Activated CD4-positive, alpha-beta T cell treated with anti-CD3 and anti-CD28 coated beads for 36 hours (primary cell): ENCODE measurements at regions of chr6 and their contacts with region 1.

Region 1: DNA sequence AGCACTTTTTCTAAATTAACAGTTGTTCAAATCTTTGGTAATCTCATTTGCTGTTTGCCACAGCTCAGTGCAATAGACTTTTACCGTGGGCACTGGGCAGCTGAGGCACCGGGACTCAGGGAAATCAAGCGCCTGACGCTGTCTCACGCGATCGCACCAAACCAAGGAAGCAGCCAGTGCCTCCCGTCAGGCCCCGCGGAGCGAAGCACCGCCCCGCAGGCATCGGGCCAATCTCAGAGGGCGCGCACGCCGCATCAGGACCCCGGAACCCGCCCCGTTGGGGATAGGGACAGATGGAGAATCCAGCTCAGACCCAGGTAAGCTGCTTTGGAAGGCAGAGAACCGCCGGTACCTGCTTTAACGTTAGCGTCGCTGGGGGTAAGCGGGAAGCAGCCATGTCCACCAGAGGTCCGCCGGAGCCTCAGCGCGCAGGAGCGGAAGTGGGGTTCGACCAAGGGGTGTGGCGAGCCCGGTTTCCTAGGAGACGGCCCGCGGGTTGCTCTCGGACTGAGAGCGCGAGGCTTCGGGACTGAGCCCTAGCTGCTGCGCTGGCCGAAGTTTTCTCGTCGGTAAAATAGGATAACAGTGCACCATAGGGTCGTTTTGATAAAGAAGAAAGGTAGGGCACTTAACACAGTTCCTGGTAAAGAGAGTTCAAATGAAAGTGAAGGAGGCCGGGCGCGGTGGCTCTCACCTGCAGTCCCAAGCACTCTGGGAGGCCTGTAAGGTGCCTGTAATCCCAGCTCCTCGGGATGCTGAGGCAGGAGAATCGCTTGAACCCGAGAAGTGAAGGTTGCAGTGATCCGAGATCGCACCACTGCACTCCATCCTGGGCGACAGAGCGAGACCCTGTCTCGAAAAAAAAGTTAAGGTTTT is at the start of gene LYRM2:
- DNase-seq: peak; percentile 96
- ATAC-seq: peak; percentile 97
- H3K4me3 Mint-ChIP-seq: peak within 1 kb of the TSS; percentile 86
- H3K27ac Mint-ChIP-seq: peak within 1 kb of the TSS; percentile 98
- H3K4me1 Mint-ChIP-seq: peaks cover 22% of the 10 kb centered on the region
- H3K27me3 Mint-ChIP-seq: no peaks in the 10 kb centered on the region
- total RNA-seq, gene LYRM2: 24.5 to 27.9 TPM

Region 2: DNA sequence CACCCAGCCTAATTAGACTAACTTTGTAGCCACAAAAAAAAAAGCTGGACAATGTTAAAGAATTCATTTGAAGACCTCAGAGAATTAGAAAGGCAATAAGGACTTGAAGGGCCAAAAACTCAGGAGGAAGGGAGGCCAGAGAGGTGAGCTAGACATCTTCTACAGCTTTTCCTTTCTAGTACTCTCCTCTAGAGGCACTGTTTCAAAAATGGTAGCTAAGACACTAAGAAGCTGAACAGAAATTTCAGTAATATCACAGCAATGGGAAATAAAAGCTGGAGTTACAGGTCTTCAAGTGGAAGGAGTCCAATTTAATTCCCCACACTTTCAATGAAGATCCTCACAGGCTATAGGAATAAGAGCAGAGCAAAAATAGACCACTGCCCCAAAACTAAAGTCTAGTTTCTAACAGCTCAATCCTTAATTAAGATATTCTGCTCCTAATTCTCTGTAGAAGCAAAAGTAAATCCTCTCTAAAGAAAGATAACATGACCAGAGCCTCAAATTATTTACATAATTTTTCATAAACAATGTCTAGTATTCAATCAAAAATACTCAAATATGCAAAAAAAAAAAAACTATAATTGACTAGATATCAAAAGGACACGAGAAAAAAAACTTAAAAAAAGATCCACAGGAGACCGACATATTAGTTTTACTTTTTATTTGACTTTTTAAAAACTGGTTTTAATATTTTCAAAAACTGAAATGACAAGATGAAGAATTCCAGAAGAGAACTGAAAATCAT is 738.8 kb before region 1 on chr6:
- CTCF ChIA-PET with region 1: no interaction called
- POLR2A ChIA-PET with region 1: no interaction called
- intact Hi-C with region 1: no loop called
- DNase-seq: no peak
- ATAC-seq: no peak
- H3K4me3 Mint-ChIP-seq: no peak overlapping the region
- H3K27ac Mint-ChIP-seq: no peak overlapping the region
- H3K4me1 Mint-ChIP-seq: no peaks in the 10 kb centered on the region
- H3K27me3 Mint-ChIP-seq: no peaks in the 10 kb centered on the region

Region 3: GRCh38 chr6:89352278-89353117 is 286.1 kb before region 1 on chr6 and contains the start of gene UBE2J1:
- CTCF ChIA-PET with region 1: no interaction called
- POLR2A ChIA-PET with region 1: interaction called, 4 read pairs
- intact Hi-C with region 1: loop called in 1 of 2 experiments (anchors 1 kb)
- DNase-seq: peak; percentile 85
- ATAC-seq: peak; percentile 84
- H3K4me3 Mint-ChIP-seq: peak within 1 kb of the TSS; percentile 91
- H3K27ac Mint-ChIP-seq: peak within 1 kb of the TSS; percentile 97
- H3K4me1 Mint-ChIP-seq: peaks cover 74% of the 10 kb centered on the region
- H3K27me3 Mint-ChIP-seq: no peaks in the 10 kb centered on the region
- total RNA-seq, gene UBE2J1: 18.7 to 21.7 TPM

Region 4: DNA sequence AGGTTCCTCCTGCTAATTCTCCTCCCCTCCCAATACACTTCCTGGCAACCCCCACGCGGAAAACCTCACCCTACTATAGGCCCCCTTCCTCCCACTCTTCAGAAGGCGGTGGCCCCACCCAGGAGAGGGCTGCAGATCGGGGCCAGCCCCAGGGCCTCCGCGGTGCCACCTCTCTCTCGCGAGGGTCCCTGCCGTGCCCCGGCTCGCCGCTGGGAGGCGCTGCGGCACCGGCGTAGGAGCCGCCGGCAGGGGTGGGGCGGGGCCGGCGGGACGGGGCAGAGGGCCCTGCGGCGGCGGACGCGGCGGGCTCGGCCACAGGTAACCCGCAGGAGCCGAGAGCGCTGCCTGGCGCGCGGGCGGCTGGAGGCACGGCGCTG is 205.7 kb before region 1 on chr6 and contains the start of gene ANKRD6:
- CTCF ChIA-PET with region 1: interaction called, 7 read pairs
- POLR2A ChIA-PET with region 1: no interaction called
- intact Hi-C with region 1: loop called (anchors 1 kb)
- DNase-seq: peak; percentile 90
- ATAC-seq: peak; percentile 96
- H3K4me3 Mint-ChIP-seq: peak within 1 kb of the TSS; percentile 67
- H3K27ac Mint-ChIP-seq: no peak within 1 kb of the TSS
- H3K4me1 Mint-ChIP-seq: peaks cover 19% of the 10 kb centered on the region
- H3K27me3 Mint-ChIP-seq: peaks cover 2% of the 10 kb centered on the region
- total RNA-seq, gene ANKRD6: 2.8 to 2.9 TPM

Region 5: GRCh38 chr6:89829591-89830385 is 191.2 kb after region 1 on chr6 and contains the start of gene CASP8AP2:
- CTCF ChIA-PET with region 1: interaction called, 3 read pairs
- POLR2A ChIA-PET with region 1: no interaction called
- intact Hi-C with region 1: loop called in 1 of 2 experiments (anchors 1 kb)
- DNase-seq: peak; percentile 98
- ATAC-seq: peak; percentile 96
- H3K4me3 Mint-ChIP-seq: peak within 1 kb of the TSS; percentile 97
- H3K27ac Mint-ChIP-seq: peak within 1 kb of the TSS; percentile 92
- H3K4me1 Mint-ChIP-seq: peaks cover 33% of the 10 kb centered on the region
- H3K27me3 Mint-ChIP-seq: no peaks in the 10 kb centered on the region
- total RNA-seq, gene CASP8AP2: 34.0 to 36.5 TPM